H1 (cell line): ENCODE measurements at regions of chr10 and their contacts with region 1.

Region 1: DNA sequence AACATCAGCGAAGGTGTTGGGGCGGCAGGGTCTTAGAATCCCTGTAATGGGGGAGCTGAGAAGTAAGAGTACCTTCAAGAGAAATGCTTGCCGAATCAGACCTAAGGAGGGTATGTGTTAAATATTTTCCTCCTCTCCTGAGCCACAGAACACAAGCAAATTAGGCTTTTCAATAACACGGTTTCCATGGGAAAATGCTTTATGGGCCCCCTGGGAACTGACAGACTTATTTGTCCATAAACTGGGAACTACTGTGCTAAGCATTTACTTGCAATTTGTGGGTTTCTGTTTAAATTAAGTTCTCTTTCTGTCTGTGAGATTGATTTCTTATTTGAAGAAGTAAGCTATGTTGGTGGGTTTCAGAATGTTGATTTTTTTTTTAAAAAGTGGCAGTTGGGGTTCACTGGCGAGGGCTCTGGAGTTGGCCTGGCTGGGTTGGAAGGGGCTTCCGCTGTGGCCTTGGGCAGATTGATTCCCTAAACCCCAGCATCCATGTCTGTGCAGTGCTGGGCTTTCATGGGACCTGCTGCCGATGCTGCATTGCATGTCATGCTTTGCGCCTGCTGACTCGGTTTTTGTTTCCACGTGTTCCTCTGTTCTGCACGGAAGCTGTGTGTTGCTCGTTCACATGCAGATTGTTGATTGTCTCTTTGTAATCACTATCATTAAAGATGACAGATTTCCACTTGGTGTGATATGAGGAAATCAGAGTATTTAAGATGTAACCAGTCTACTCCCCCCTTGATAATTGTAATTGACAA is 7.2 kb downstream of the RBM17 start:
- DNase-seq: no peak
- H3K4me3 ChIP-seq: no peak overlapping the region
- H3K27ac ChIP-seq: no peak overlapping the region
- H3K4me1 ChIP-seq: peaks cover 6 to 31% (median 20%) of the 10 kb centered on the region in 4 experiments
- H3K27me3 ChIP-seq: no peaks in the 10 kb centered on the region
- CTCF ChIP-seq: no peak
- EP300 ChIP-seq: no peak
- POLR2A ChIP-seq: no peak
- RAD21 ChIP-seq: no peak

Region 2: DNA sequence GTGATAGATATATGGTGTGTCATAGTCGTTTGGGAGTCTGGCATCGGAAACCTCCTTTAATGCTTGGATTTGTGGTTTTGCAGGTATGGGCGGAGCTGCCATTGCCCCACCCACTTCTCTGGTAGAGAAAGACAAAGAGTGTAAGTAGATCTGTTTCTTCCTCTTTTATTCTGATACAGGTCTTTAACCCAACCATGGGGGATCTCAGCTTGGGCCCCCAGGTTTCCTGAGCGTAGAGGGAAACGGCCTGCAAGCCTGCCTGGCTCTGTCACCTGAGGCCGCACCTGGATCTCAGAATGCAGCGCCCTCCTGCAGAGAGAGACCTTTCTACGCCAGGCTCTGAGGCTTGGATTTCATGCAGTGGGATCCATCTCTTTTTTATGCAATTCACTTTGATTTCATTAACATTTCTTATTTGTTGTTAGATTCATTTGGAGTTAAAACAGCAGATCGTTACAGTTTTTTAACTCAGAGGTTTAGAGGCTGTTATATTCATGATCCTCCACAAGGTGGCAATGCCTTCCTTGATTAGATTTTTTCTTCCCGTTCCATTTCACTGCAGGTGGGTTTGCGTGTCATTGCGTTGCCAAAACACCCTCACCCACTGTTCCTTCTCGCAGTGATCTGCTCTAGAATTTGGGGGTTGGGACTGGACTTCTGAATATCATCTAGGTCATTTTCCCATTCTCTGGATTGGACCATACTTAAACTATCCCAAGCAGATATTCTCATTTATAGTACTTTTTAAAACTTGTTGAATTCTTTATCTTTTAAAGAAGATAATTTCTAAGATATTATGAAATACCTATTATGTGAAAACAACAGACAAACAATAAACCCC is 12.8 kb after region 1 on chr10:
- CTCF ChIA-PET with region 1: interaction called, 21 read pairs
- POLR2A ChIA-PET with region 1: interaction called, 4 read pairs
- DNase-seq: peak in 1 of 2 experiments; percentile 49
- H3K4me3 ChIP-seq: peak overlapping the region in 1 of 4 experiments; percentile 19; a peak in 1 of 8 replicates
- H3K27ac ChIP-seq: no peak overlapping the region
- H3K4me1 ChIP-seq: peaks cover 4 to 21% (median 10%) of the 10 kb centered on the region in 4 experiments; a peak in 4 of 7 replicates
- H3K27me3 ChIP-seq: no peaks in the 10 kb centered on the region
- CTCF ChIP-seq: peak in 2 of 3 experiments; percentile 47 to 57; a peak in 3 of 4 replicates
- EP300 ChIP-seq: no peak
- POLR2A ChIP-seq: no peak
- RAD21 ChIP-seq: peak; percentile 72 to 76